ENCODE measurements at regions of chr6 and their contacts with region 1.

Region 1: GRCh38 chr6:12890171-12890790 is 173.7 kb downstream of the PHACTR1 start:
- DNase-seq: no peak
- ATAC-seq: no peak
- H3K4me3 ChIP-seq: no peak overlapping the region
- H3K27ac ChIP-seq: no peak overlapping the region
- H3K4me1 ChIP-seq: no peaks in the 10 kb centered on the region
- H3K27me3 ChIP-seq: no peaks in the 10 kb centered on the region
- CTCF ChIP-seq: no peak

Region 2: GRCh38 chr6:12637960-12638641 is 252.2 kb before region 1 on chr6:
- intact Hi-C with region 1: loop called in 1 of 2 experiments (anchors 10 kb)
- DNase-seq: no peak
- ATAC-seq: no peak
- H3K4me3 ChIP-seq: no peak overlapping the region
- H3K27ac ChIP-seq: no peak overlapping the region
- H3K4me1 ChIP-seq: no peaks in the 10 kb centered on the region
- H3K27me3 ChIP-seq: no peaks in the 10 kb centered on the region
- CTCF ChIP-seq: peak; percentile 34